Endothelial cell of umbilical vein (primary cell): ENCODE measurements at regions of chr2 and their contacts with region 1.

Region 1: GRCh38 chr2:70301344-70302194 is at the start of gene FAM136A:
- DNase-seq: peak; percentile 80
- H3K4me3 ChIP-seq: peak within 1 kb of the TSS; percentile 52 to 90 (median 62)
- H3K27ac ChIP-seq: peak within 1 kb of the TSS; percentile 6
- H3K4me1 ChIP-seq: peaks cover 5% of the 10 kb centered on the region
- H3K27me3 ChIP-seq: no peaks in the 10 kb centered on the region
- CTCF ChIP-seq: peak; percentile 70 to 97
- POLR2A ChIP-seq: peak; percentile 93
- total RNA-seq, gene FAM136A: 42.4 and 45.7 TPM in 2 replicates

Region 2: DNA sequence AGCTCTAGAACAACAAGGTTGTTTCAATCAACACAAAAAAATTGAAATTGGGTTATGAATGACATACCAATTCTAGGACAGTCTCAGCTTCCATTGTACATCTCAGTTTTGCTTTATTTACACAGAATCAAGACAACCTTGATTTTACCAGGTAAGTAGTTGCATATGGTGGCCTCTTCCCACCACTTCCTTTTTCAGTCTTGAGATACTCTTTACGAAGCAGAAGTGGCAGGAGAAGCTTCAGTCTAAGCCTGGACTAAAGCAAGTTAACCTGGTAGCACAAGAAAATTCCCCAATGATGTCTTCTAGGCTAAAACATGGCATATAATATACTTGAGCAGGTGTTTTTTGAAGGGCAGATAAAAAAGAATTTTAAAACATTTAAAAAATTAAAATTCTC is 11.0 kb after region 1 on chr2:
- CTCF ChIA-PET with region 1: interaction called, 11 read pairs
- POLR2A ChIA-PET with region 1: no interaction called
- dilution Hi-C with region 1: no loop called
- intact Hi-C with region 1: no loop called
- DNase-seq: no peak
- H3K4me3 ChIP-seq: no peak overlapping the region
- H3K27ac ChIP-seq: no peak overlapping the region
- H3K4me1 ChIP-seq: no peaks in the 10 kb centered on the region
- H3K27me3 ChIP-seq: peaks cover 3 to 5% of the 10 kb centered on the region in 2 experiments
- CTCF ChIP-seq: no peak
- POLR2A ChIP-seq: no peak

Region 3: DNA sequence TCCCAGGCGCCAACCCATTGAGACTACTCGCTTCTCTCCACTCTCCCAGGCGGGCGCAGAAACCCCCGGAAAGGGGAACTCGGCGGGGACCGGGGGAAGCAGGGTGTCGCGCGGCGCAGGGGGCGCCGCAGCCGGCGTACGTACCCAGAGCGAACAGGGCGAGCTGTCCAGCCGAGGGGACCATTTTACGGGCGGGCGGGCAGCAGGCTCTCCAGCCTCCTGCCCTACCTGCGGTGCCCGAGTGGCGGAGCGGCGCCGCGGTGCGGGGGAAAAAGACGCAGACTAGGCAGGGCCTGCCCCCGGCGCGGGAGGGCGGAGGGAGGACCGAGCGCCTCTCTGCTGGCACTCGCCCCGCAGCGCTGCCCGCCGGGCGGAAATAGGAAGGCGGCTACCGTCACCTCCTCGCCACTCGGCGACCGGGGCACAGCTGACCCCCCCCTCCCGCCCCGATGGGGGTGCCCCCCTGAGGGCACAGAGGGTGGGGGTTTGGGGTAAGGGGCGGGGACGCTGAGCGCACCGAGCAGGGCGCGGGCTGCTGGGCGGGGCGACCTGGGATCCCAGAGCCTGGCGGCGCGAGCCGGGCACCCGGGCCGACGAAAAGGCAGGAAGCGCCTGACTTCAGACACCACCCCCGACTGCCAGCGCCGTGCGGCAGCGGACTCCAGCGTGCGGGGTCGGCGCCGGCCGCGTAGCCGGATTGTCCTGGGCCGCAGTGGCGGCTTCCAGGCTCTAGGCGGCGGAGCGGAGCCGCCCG is 252.2 kb after region 1 on chr2 and contains the start of gene TGFA:
- CTCF ChIA-PET with region 1: interaction called, 4 read pairs
- POLR2A ChIA-PET with region 1: no interaction called
- dilution Hi-C with region 1: no loop called
- intact Hi-C with region 1: loop called (anchors 5 kb)
- DNase-seq: peak; percentile 38
- H3K4me3 ChIP-seq: peak within 1 kb of the TSS; percentile 29 to 45 (median 35)
- H3K27ac ChIP-seq: no peak within 1 kb of the TSS
- H3K4me1 ChIP-seq: peaks cover 9% of the 10 kb centered on the region
- H3K27me3 ChIP-seq: peaks cover 48 to 51% of the 10 kb centered on the region in 2 experiments
- CTCF ChIP-seq: peak; percentile 69 to 91
- POLR2A ChIP-seq: no peak
- total RNA-seq, gene TGFA: 0.12 and 0.22 TPM in 2 replicates

Region 4: GRCh38 chr2:70641263-70641784 is 339.8 kb after region 1 on chr2:
- CTCF ChIA-PET with region 1: interaction called, 201 read pairs
- POLR2A ChIA-PET with region 1: no interaction called
- dilution Hi-C with region 1: no loop called
- intact Hi-C with region 1: no loop called
- DNase-seq: no peak
- H3K4me3 ChIP-seq: no peak overlapping the region
- H3K27ac ChIP-seq: no peak overlapping the region
- H3K4me1 ChIP-seq: no peaks in the 10 kb centered on the region
- H3K27me3 ChIP-seq: peaks cover 6 to 9% of the 10 kb centered on the region in 2 experiments
- CTCF ChIP-seq: no peak
- POLR2A ChIP-seq: no peak

Region 5: DNA sequence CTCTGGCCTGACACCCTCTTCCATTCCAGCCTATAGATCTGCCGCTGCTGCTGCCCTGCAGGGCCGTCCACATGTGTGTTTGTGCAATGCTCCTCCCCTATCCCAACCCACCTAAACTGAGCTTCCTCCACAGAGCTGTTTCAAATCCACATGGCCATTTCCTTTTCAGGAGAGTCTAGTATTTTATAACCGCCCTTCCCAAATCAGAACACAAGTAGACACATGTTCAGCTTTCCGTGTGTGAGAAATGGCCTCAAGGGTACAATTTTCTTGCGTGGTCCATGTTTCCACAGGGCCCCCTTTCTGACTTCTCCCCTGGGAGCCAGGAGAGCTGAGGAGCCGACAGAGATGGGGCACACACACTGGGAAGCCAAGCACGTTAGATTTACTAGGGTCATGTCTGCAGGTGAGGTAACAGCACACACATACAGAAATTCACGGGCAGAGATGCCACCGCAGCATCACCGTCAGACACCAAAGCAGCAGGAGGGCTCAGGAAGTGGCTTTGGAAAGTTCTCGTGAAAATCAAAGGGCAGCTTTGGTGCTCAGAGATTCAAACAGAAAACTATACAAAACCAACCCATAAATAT is 354.9 kb after region 1 on chr2:
- CTCF ChIA-PET with region 1: interaction called, 16 read pairs
- POLR2A ChIA-PET with region 1: no interaction called
- dilution Hi-C with region 1: no loop called
- intact Hi-C with region 1: no loop called
- DNase-seq: no peak
- H3K4me3 ChIP-seq: no peak overlapping the region
- H3K27ac ChIP-seq: no peak overlapping the region
- H3K4me1 ChIP-seq: no peaks in the 10 kb centered on the region
- H3K27me3 ChIP-seq: peaks cover 14 to 27% of the 10 kb centered on the region in 2 experiments
- CTCF ChIP-seq: no peak
- POLR2A ChIP-seq: no peak

Region 6: DNA sequence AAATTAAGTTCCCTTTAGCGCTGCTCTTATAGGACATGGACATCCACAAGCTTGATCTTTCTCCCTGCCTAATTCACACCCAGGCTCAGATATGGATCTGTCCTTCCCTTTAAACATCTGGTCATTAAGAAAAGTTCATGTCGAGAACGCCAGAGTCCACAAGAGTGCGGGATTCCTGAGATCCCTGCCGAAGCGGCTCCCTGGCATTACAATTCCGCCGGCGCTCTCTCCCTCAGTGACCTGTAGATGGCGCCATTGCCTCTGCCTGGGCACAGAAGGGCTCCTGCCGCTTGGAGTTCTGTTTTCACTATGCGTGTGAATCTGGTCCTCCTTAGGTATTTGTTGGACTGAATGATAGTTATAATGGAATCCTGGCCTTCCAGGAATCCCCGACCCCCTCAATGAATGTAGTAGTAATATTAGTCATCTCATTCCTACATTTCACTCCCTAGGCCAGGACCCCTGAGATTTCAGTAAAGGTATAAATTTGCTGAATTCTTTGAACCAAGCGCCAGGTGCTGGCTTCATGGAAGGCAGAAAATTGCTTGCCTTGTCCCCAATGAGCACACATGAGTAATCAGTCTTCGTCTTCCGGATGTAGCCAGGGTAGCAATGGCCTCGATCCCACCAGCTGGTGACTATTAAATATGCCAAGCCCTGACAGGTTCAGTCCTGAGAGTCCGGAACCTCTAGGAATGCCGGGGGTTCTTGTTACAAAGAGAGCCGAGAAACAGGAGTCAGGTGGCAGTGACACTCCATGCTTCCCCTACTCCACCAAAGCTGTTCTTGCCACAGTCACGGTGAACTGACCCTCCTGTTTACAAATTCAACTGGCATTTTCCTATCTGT is 560.4 kb after region 1 on chr2:
- CTCF ChIA-PET with region 1: interaction called, 4 read pairs
- POLR2A ChIA-PET with region 1: no interaction called
- dilution Hi-C with region 1: no loop called
- intact Hi-C with region 1: loop called (anchors 5 kb)
- DNase-seq: peak; percentile 79
- H3K4me3 ChIP-seq: no peak overlapping the region
- H3K27ac ChIP-seq: no peak overlapping the region
- H3K4me1 ChIP-seq: no peaks in the 10 kb centered on the region
- H3K27me3 ChIP-seq: peaks cover 36 to 50% of the 10 kb centered on the region in 2 experiments
- CTCF ChIP-seq: peak; percentile 95 to 99
- POLR2A ChIP-seq: no peak